PC-9 (cell line): ENCODE measurements at regions of chr7 and their contacts with region 1.

Region 1: DNA sequence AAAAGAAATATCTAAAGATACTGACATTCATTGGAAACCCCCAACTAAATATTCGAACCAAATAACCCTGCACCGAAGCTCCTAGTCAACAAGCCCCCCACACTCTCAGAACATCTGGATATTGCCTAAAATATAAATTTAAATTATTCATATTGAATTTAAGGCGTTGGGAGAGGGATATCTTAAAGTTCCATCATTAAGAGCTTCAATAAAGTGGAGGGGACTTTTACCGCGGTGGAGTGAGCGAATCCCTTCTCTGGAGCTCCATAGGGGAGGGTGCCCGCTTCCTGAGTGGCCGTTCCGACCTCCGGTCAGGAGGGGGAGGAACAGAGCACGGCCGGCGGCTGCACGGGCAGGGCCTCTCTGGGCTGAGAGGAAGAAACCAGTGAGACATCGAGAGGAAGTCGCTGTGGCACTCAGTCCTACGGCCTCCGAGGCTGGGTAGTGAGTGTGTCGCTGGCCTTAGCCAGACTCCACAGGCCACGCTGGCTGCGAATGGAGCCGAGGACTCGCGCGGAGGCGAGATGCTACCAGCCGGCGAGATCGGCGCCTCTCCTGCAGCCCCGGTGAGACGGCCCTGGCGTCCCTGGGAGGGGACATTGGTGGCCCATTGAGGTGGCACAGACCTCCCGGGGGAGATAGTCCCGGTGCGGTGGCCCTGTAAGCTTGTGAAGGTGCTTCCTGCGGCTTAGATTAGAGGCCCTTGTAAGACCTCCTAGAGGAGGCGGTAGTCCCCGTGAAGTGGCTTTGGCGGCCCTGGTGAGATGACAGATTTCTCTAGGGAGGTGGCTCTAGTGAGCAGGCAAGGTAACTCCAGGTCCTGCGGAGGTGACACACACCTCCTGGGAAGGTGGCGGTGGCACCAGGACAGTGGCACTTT is at the start of gene RINT1:
- DNase-seq: peak; percentile 85 to 96
- H3K4me3 ChIP-seq: peak within 1 kb of the TSS; percentile 89
- H3K27ac ChIP-seq: peak within 1 kb of the TSS; percentile 66
- H3K4me1 ChIP-seq: peaks cover 11% of the 10 kb centered on the region
- H3K27me3 ChIP-seq: no peaks in the 10 kb centered on the region
- CTCF ChIP-seq: peak; percentile 56; the same call in 1 of the 2 replicates
- total RNA-seq, gene RINT1: 21.4 and 25.1 TPM in 2 replicates

Region 2: DNA sequence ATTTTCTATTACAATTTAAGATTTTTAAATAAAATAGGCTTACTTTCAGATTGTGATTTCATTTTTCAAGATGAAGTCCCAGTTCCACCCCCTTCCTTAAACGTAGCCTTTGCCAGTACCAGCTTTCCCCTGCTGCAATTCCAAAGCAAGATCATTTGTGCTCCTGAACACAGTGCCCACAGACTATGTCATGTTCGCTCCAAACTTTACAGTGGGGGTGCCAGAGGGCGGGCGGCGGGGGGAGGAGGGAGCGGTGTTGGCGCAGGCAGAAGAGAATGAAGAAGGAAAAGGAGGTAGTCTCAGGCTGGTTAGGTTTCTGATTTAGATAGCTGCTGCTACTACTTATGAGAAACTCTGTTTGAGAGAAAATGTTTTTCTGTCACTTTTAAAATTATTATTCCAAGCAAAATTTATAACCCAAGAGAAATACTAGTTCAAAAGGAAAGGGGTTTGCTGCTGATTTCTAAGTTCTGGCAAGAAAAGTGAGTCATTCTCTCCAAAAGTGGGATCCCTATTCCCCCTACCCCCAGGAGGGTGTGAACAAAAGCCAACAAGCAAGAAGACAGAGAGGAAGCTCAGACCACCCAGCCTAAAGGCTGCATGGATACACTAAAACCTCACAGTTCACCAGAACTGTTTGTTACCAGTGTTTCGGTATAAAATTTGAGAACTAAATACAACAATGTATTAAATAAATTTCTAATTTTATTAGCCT is 252.9 kb before region 1 on chr7:
- CTCF ChIA-PET with region 1: no interaction called
- POLR2A ChIA-PET with region 1: no interaction called
- intact Hi-C with region 1: no loop called
- DNase-seq: no peak
- H3K4me3 ChIP-seq: no peak overlapping the region
- H3K27ac ChIP-seq: no peak overlapping the region
- H3K4me1 ChIP-seq: no peaks in the 10 kb centered on the region
- H3K27me3 ChIP-seq: no peaks in the 10 kb centered on the region
- CTCF ChIP-seq: no peak

Region 3: DNA sequence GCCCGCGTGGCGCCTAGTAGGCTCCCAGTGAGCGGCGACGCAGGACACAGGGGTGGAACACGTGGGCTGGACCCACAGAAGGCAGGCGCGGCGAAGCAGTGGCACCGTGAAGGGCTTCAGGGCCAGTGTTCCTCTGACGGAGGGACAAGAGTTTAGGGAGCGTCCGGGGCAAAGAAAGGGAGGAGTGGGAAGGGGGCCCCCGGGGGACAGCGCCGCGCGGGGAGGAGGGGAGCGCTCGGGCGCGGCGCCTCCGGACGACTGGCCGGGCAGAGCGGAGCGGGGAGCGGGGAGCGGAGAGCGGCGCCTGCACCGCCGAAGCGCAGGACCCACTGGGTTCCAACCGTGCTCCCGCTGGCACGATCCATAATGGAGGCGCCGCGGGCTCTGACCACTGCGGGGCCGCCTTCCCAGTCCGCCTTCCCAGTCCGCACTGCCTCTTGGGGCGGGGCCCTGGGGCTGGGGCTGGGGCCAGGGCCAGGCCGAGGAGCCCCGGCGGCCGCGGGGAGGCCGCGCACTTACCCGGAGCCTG is 10.4 kb before region 1 on chr7:
- CTCF ChIA-PET with region 1: no interaction called
- POLR2A ChIA-PET with region 1: interaction called, 6 read pairs
- intact Hi-C with region 1: loop called (anchors 1 kb)
- DNase-seq: peak; percentile 52 to 87
- H3K4me3 ChIP-seq: peak overlapping the region; percentile 89
- H3K27ac ChIP-seq: peak overlapping the region; percentile 67
- H3K4me1 ChIP-seq: peaks cover 12% of the 10 kb centered on the region
- H3K27me3 ChIP-seq: no peaks in the 10 kb centered on the region
- CTCF ChIP-seq: no peak

Region 4: DNA sequence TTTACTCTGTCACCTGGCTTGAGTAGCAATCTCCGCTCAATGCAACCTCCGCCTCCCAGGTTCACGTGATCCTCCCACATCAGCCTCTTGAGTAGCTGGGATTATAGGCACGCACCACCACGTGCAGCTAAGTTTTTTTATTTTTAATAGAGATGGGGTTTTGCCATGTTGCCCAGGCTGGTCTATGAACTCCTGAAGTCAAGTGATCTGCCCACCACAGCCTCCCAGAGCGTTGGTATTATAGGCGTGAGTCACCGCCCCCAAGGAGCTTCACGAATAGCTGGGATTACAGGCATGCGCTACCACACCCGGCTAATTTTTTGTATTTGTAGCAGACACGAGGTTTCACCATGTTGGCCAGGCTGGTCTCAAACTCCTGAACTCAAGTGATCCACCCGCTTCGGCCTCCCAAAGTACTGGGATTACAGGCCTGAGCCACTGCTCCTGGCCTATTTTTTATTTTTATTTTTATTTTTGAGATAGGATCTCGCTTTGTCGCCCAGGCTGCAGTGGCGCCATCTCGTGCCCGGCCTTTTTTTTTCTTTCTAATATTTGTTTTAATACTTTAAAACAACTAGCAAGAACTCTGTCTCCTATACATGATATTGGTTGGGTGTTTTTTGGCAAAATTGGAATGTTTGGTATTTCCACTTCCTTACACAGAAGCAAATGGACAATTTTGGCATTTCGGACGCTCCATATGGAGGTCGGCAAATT is 48.1 kb after region 1 on chr7:
- CTCF ChIA-PET with region 1: no interaction called
- POLR2A ChIA-PET with region 1: no interaction called
- intact Hi-C with region 1: no loop called
- DNase-seq: peak in 1 of 2 experiments; percentile 18
- H3K4me3 ChIP-seq: no peak overlapping the region
- H3K27ac ChIP-seq: no peak overlapping the region
- H3K4me1 ChIP-seq: no peaks in the 10 kb centered on the region
- H3K27me3 ChIP-seq: no peaks in the 10 kb centered on the region
- CTCF ChIP-seq: no peak